ENCODE measurements at regions of chr6 and their contacts with region 1.

Region 1: GRCh38 chr6:41705996-41706835 is 29.2 kb downstream of the TFEB start:
- DNase-seq: peak; percentile 80
- H3K4me3 ChIP-seq: peak overlapping the region in 1 of 2 experiments; percentile 13; a peak in 1 of 4 replicates
- H3K27ac ChIP-seq: peak overlapping the region; percentile 56 to 83; a peak in 3 of 4 replicates
- H3K4me1 ChIP-seq: peaks cover 17 to 31% of the 10 kb centered on the region in 2 experiments; a peak in 3 of 4 replicates
- H3K27me3 ChIP-seq: no peaks in the 10 kb centered on the region
- CTCF ChIP-seq: peak; percentile 86
- EP300 ChIP-seq: no peak
- RAD21 ChIP-seq: peak; percentile 54

Region 2: GRCh38 chr6:41374618-41375590 is 331.3 kb before region 1 on chr6:
- CTCF ChIA-PET with region 1: no interaction called
- POLR2A ChIA-PET with region 1: no interaction called
- DNase-seq: peak; percentile 40
- H3K4me3 ChIP-seq: no peak overlapping the region; a peak in 1 of 4 replicates
- H3K27ac ChIP-seq: no peak overlapping the region
- H3K4me1 ChIP-seq: peaks cover 2 to 3% of the 10 kb centered on the region in 2 experiments; a peak in 1 of 4 replicates
- H3K27me3 ChIP-seq: peaks cover 87% of the 10 kb centered on the region
- CTCF ChIP-seq: no peak
- EP300 ChIP-seq: no peak
- RAD21 ChIP-seq: no peak

Region 3: DNA sequence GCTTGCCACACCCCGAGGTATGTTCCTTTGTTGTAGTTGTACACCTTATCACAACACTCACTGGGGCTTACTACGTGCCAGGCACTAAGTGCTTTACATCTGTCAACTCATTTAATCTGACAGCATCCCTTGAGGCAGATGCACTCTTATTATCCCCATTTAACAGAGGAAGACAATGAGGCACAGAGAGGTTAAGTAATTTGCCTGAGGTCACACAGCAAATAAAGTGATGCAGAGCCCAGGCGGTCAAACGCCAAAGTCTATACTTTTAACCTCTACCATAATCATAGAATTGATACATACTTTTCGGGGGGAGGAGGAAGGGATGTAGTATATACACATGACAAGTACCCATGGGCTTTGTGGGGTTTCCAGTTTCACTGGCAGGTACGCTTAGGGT is 30.2 kb before region 1 on chr6:
- CTCF ChIA-PET with region 1: no interaction called
- POLR2A ChIA-PET with region 1: no interaction called
- DNase-seq: no peak
- H3K4me3 ChIP-seq: no peak overlapping the region
- H3K27ac ChIP-seq: peak overlapping the region in 1 of 2 experiments; percentile 35; a peak in 1 of 4 replicates
- H3K4me1 ChIP-seq: peaks cover 0 to 13% of the 10 kb centered on the region in 2 experiments; a peak in 1 of 4 replicates
- H3K27me3 ChIP-seq: no peaks in the 10 kb centered on the region; the same call in 1 of the 2 replicates
- CTCF ChIP-seq: no peak
- EP300 ChIP-seq: no peak
- RAD21 ChIP-seq: no peak

Region 4: DNA sequence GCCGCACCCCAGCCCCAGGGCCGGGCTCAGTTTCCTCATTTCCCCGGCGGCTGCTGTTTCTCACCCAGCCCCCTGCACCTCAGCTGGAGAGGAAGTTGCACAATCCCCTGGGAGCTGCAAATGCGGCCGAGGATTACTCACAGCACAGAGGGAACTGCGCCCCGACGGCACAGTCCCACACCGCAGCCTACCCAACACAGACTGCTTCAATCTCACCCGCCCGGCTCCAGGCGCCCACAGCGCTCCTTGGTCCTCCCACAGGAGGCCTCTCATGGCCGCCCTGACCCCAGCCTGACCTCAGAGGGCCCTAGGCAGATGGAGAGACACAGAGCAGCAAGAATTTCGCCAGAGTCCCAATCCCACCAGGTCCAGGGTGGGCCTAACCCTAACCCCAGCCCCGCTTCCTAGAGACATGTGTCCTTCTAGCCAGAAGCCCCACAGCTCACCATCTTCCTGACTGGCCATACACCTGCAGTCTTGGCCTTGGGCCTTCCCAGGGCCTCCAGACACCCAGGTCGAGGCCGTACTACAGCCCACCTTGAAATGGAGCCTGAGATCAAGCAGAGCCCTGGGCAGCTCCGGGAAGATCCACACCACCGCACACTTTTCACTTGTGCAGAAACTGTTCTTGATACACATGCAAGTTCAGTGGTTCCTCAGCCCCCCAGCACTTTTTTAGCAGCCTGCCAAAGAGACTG is 17.5 kb after region 1 on chr6:
- CTCF ChIA-PET with region 1: interaction called, 15 read pairs
- POLR2A ChIA-PET with region 1: no interaction called
- DNase-seq: no peak
- H3K4me3 ChIP-seq: no peak overlapping the region
- H3K27ac ChIP-seq: peak overlapping the region in 1 of 2 experiments; percentile 51; a peak in 2 of 4 replicates
- H3K4me1 ChIP-seq: peaks cover 14 to 25% of the 10 kb centered on the region in 2 experiments; a peak in 2 of 4 replicates
- H3K27me3 ChIP-seq: no peaks in the 10 kb centered on the region
- CTCF ChIP-seq: no peak
- EP300 ChIP-seq: peak in 1 of 2 experiments; percentile 24; a peak in 1 of 4 replicates
- RAD21 ChIP-seq: no peak

Region 5: GRCh38 chr6:41735427-41736356 is 29.5 kb after region 1 on chr6 and contains the start of gene TFEB:
- CTCF ChIA-PET with region 1: interaction called, 29 read pairs
- POLR2A ChIA-PET with region 1: interaction called, 12 read pairs
- DNase-seq: peak; percentile 96
- H3K4me3 ChIP-seq: peak within 1 kb of the TSS; percentile 71 to 72
- H3K27ac ChIP-seq: peak within 1 kb of the TSS; percentile 81 to 96; a peak in 3 of 4 replicates
- H3K4me1 ChIP-seq: peaks cover 23 to 31% of the 10 kb centered on the region in 2 experiments
- H3K27me3 ChIP-seq: no peaks in the 10 kb centered on the region
- CTCF ChIP-seq: peak; percentile 74
- EP300 ChIP-seq: peak in 1 of 2 experiments; percentile 16; a peak in 1 of 4 replicates
- RAD21 ChIP-seq: peak; percentile 63
- polyA plus RNA-seq, gene TFEB: 6.2 and 6.7 TPM in 2 replicates